ENCODE measurements at regions of chr7 and their contacts with region 1.

Region 1: GRCh38 chr7:26090927-26091519 is 61.0 kb upstream of the NFE2L3 start:
- DNase-seq: no peak
- H3K4me3 Mint-ChIP-seq: no peak overlapping the region
- H3K27ac Mint-ChIP-seq: no peak overlapping the region
- H3K4me1 Mint-ChIP-seq: peaks cover 15% of the 10 kb centered on the region
- H3K27me3 Mint-ChIP-seq: no peaks in the 10 kb centered on the region

Region 2: GRCh38 chr7:25894902-25895791 is 195.9 kb before region 1 on chr7:
- CTCF ChIA-PET with region 1: interaction called, 21 read pairs
- POLR2A ChIA-PET with region 1: no interaction called
- DNase-seq: peak; percentile 62
- H3K4me3 Mint-ChIP-seq: no peak overlapping the region
- H3K27ac Mint-ChIP-seq: no peak overlapping the region
- H3K4me1 Mint-ChIP-seq: peaks cover 28% of the 10 kb centered on the region
- H3K27me3 Mint-ChIP-seq: peaks cover 4% of the 10 kb centered on the region

Region 3: DNA sequence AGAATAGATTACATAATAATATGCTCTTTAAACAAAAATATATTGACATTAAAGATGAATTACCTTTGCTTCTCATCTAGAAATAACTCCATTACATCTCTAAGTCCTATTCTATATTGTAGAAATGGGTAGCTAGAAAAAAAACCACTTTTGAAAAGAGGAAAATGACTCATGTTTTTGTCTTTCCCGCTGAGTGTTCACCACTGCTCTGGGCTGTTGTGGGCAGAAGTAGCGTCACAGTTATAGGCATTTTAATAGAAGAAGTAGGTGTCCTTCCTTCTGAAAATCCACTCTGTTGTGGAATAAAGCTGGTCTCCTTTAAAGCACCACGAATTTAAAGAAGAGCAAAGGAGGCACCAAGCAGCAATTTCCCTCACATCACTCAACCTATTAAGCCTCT is 56.6 kb before region 1 on chr7:
- CTCF ChIA-PET with region 1: no interaction called
- POLR2A ChIA-PET with region 1: no interaction called
- DNase-seq: no peak
- H3K4me3 Mint-ChIP-seq: no peak overlapping the region
- H3K27ac Mint-ChIP-seq: no peak overlapping the region
- H3K4me1 Mint-ChIP-seq: peaks cover 7% of the 10 kb centered on the region
- H3K27me3 Mint-ChIP-seq: peaks cover 29% of the 10 kb centered on the region

Region 4: DNA sequence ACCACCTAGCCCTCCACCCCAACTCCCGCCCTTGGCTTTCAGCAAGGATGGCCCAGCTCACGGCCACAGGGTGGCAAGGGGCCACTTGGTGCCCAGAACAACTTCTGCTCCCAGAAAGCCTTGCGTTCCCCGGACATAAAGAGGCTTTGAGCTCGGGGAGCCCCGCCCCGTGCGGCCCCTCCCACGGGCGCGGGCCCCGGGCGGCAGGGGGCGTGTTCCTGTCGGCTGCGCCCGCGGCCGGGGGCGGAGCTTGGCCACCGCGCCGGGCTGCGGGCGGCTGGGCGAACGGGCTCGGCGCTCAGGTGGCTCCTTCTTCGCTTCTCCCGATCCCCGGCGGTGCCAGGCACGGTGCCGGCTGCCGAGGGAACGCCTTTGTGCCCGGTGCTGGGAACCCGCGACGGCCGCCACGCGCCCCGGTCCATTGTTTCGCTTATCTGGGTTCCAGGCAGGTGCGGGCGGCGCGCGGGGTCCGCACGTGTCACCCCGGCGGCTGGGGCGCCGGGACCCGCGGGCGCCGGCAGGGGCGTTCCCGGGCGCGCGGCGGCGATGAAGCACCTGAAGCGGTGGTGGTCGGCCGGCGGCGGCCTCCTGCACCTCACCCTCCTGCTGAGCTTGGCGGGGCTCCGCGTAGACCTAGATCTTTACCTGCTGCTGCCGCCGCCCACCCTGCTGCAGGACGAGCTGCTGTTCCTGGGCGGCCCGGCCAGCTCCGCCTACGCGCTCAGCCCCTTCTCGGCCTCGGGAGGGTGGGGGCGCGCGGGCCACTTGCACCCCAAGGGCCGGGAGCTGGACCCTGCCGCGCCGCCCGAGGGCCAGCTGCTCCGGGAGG is 61.1 kb after region 1 on chr7 and contains the start of gene NFE2L3:
- CTCF ChIA-PET with region 1: interaction called, 11 read pairs
- POLR2A ChIA-PET with region 1: interaction called, 6 read pairs
- DNase-seq: peak; percentile 88
- H3K4me3 Mint-ChIP-seq: peak within 1 kb of the TSS; percentile 94
- H3K27ac Mint-ChIP-seq: peak within 1 kb of the TSS; percentile 97
- H3K4me1 Mint-ChIP-seq: peaks cover 55% of the 10 kb centered on the region
- H3K27me3 Mint-ChIP-seq: no peaks in the 10 kb centered on the region
- total RNA-seq, gene NFE2L3: 21.5 to 24.0 TPM

Region 5: GRCh38 chr7:26187380-26188205 is 96.6 kb after region 1 on chr7:
- CTCF ChIA-PET with region 1: interaction called, 27 read pairs
- POLR2A ChIA-PET with region 1: interaction called, 112 read pairs
- DNase-seq: no peak
- H3K4me3 Mint-ChIP-seq: no peak overlapping the region
- H3K27ac Mint-ChIP-seq: peak overlapping the region; percentile 63
- H3K4me1 Mint-ChIP-seq: peaks cover 78% of the 10 kb centered on the region
- H3K27me3 Mint-ChIP-seq: no peaks in the 10 kb centered on the region

Region 6: DNA sequence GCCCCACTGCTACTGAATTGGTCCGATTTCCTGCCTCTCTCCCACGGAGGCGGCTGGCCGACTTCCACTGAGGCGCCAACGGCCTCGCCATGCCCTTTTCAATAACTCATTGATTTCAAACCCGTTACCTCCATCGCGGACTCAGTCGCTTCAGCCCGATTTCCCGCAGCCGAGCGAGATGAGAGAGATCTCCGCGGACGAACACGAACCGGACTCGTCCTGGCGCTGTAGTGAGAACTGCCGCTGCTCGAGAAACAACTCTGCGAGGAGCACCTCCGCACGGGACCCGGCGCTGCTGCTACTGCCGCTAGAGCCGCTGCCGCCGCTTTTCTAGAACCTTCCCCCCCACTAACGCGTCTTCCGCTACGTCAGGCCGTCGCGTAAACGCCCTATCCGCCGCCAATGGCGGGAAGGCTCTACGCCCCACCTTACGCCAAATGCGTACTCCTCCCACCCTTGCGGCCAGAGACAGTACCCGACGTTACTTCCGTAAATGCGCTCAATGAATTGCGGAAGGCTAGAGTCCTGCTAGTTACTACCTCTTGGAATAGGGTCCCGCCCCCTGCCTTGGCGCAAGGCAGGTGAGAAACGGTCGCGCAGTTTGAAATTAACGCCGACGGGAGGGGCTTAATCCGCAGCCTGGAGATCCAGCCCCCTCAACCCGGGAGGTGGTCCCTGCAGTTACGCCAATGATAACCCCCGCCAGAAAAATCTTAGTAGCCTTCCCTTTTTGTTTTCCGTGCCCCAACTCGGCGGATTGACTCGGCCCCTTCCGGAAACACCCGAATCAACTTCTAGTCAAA is 109.6 kb after region 1 on chr7 and contains the start of gene HNRNPA2B1:
- CTCF ChIA-PET with region 1: interaction called, 29 read pairs
- POLR2A ChIA-PET with region 1: interaction called, 112 read pairs
- DNase-seq: peak; percentile 98
- H3K4me3 Mint-ChIP-seq: peak within 1 kb of the TSS; percentile 94
- H3K27ac Mint-ChIP-seq: peak within 1 kb of the TSS; percentile 98
- H3K4me1 Mint-ChIP-seq: peaks cover 41% of the 10 kb centered on the region
- H3K27me3 Mint-ChIP-seq: no peaks in the 10 kb centered on the region
- total RNA-seq, gene HNRNPA2B1: 696 to 705 TPM